ENCODE measurements at regions of chr2 and their contacts with region 1.

Region 1: DNA sequence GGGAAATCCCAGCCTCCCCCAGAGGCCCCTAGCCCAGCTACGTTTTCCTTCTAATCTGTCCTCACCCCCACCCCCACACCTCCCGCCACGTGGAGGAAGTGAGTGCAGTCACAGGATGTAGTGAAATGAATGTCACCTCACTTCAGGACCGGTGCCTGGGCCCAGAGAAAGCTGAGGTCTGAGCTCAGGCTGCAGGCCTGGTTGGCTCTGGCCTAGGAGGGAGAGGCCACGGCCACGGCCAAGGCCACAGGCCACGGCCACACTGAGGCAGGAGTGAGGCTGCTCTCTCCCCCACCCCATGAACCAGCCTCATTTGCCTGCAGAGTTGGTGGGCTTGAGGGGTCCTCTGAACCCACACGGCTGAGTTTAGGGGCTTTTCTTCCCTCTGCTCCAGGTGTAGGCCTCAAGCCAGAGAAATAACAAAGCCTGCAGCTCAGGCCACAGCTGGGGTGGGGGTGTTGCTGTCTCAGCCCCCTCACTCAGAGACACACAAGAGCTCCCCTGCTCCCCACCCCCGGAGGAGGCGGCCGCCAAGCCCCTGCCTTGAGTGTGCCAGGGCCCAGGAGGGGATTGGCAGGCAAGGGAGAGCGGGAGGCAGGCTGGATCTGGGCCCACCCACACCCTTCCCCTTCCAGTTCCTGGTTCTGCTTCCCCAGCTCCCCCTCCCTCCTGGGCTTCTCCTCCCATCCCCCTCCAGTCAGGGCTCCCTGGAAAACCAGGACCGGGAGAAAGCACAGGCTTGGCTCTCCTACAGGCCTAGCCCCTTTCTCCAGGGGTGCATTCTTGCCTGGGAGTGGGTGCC is 27.0 kb downstream of the DNMT3A start:
- DNase-seq: peak; percentile 98
- H3K4me3 Mint-ChIP-seq: peak overlapping the region; percentile 92
- H3K27ac Mint-ChIP-seq: peak overlapping the region; percentile 97
- H3K4me1 Mint-ChIP-seq: peaks cover 64% of the 10 kb centered on the region
- H3K27me3 Mint-ChIP-seq: no peaks in the 10 kb centered on the region

Region 2: GRCh38 chr2:25240636-25241035 is 74.1 kb before region 1 on chr2:
- CTCF ChIA-PET with region 1: no interaction called
- intact Hi-C with region 1: no loop called
- DNase-seq: no peak
- H3K4me3 Mint-ChIP-seq: no peak overlapping the region
- H3K27ac Mint-ChIP-seq: no peak overlapping the region
- H3K4me1 Mint-ChIP-seq: no peaks in the 10 kb centered on the region
- H3K27me3 Mint-ChIP-seq: no peaks in the 10 kb centered on the region

Region 3: DNA sequence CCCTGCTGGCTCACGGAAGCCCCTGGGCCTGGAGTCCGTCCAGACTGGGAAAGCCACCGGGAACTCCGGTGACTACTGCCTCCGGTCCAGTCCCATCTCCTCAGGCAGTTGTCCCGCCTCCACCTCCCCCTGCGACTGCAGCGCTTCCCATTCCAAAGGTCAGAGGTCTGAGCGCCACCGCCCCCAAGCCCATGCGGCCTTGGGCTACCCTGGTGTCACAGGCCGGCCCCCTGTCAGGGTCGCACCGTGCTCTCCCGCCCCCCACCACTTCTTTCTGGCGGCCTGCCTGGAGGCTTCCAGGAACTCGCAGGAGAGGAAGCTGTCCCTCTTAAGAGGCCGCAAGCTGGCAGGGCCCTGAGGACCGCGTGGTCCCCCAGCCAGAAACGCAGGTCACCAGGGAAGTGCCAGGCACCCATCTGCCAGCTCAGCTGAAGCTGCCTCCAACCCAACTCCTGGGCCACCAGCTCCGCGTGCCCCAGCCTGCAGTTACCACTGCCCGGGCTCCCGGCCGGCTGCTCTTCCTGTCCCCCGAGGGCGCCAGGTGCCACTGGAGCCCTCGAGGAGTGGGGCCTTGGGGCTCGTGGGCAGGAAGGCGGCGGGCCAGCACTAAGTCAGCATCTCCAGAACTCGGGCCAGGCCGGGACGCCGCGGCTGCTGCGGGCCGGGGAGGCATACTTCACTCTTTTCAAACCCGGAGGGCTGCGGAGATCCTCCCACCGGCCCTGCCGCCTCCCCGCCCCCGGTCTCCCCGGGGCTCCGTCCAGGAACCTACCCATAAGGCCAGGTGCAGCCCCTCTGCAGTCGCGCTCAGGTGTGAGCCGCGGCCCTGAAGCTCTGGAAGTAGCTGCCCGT is 63.1 kb before region 1 on chr2:
- CTCF ChIA-PET with region 1: no interaction called
- intact Hi-C with region 1: loop called (anchors 2 kb)
- DNase-seq: peak; percentile 45
- H3K4me3 Mint-ChIP-seq: peak overlapping the region; percentile 81
- H3K27ac Mint-ChIP-seq: peak overlapping the region; percentile 85
- H3K4me1 Mint-ChIP-seq: peaks cover 18% of the 10 kb centered on the region
- H3K27me3 Mint-ChIP-seq: no peaks in the 10 kb centered on the region

Region 4: DNA sequence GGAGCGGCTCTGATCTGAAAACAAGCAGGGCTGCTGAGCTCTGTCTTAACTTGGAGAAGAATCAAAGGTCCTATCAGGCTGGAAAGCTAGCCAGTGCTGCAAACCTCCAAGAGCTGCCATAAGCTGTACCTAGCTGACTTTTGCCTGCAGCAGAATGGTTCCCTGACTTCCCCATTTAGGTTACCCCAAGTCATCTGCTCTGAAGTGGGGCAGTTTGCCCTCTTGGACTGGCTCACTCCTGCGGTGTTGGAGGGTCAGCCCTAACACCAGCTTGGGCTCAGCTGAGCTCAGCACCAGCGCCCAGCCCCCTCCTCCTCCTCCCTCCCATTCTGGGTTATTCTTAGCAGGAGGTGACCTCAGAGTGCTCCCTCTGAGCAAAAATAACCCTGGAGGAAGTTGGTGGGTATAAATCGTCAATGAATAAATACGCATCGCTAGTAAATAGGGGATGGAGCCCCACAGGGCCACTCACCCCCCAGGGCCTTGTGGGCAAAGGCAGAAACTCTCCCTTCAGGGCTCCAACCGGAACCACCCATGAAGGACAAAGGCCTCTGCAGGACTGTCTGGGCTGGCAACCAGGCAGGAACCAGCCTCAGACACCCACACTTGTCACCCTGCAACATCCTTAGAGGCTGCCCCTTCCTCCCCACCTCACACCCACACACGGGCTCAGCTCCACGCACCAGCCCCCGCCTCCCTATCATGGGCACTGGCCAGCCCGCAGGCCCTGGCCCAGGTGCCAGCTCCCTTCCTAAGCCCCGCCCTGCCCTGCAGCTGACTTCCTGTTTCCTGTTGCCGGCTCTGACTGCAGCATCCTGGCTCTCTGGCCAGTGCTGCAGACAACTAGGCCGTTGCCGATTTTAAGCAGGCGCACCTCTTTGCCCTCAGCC is 19.9 kb before region 1 on chr2:
- CTCF ChIA-PET with region 1: interaction called, 10 read pairs
- intact Hi-C with region 1: loop called (anchors 1 kb)
- DNase-seq: peak; percentile 89
- H3K4me3 Mint-ChIP-seq: peak overlapping the region; percentile 68
- H3K27ac Mint-ChIP-seq: peak overlapping the region; percentile 90
- H3K4me1 Mint-ChIP-seq: peaks cover 60% of the 10 kb centered on the region
- H3K27me3 Mint-ChIP-seq: no peaks in the 10 kb centered on the region

Region 5: DNA sequence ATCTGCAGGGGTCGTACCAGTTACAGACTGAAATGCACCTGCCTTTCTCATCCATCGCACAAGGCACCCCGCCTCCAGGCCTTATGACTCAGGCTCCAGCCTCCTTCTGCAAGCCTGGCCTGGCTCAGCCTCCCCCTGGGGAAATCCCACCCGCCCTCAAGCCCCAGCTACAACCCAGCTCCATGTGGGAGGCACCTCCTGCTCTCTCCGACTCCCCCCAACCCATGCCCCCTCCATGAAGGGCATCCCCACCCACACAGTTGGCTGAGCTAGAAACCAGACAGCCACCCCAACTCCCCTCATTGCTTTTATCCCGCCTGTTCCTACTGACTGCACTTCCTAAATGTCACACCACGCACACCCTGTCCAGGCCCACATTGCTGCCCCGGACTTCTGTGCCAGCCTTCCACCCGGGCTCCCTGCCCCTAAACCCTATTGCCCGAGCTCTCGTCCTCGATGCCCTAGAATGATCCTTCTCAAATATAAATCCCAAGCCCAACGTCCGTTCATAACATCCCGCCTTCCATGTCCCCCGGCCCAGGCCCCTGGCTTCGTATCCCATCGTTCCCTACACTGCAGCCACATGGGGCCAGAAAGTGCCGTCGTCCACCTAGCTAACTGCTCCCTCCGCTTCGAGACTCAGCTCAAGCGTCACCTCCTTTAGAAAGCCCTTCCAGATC is 17.1 kb after region 1 on chr2:
- CTCF ChIA-PET with region 1: interaction called, 13 read pairs
- intact Hi-C with region 1: loop called (anchors 1 kb)
- DNase-seq: peak; percentile 83
- H3K4me3 Mint-ChIP-seq: no peak overlapping the region
- H3K27ac Mint-ChIP-seq: no peak overlapping the region
- H3K4me1 Mint-ChIP-seq: peaks cover 64% of the 10 kb centered on the region
- H3K27me3 Mint-ChIP-seq: no peaks in the 10 kb centered on the region

Region 6: GRCh38 chr2:25342372-25343186 is 27.9 kb after region 1 on chr2:
- CTCF ChIA-PET with region 1: interaction called, 10 read pairs
- intact Hi-C with region 1: loop called (anchors 1 kb)
- DNase-seq: peak; percentile 82
- H3K4me3 Mint-ChIP-seq: peak overlapping the region; percentile 80
- H3K27ac Mint-ChIP-seq: peak overlapping the region; percentile 71
- H3K4me1 Mint-ChIP-seq: peaks cover 37% of the 10 kb centered on the region
- H3K27me3 Mint-ChIP-seq: no peaks in the 10 kb centered on the region

Region 7: GRCh38 chr2:25521665-25522387 is 207.1 kb after region 1 on chr2:
- CTCF ChIA-PET with region 1: interaction called, 7 read pairs
- intact Hi-C with region 1: loop called (anchors 1 kb)
- DNase-seq: peak; percentile 53
- H3K4me3 Mint-ChIP-seq: peak overlapping the region; percentile 11
- H3K27ac Mint-ChIP-seq: peak overlapping the region; percentile 64
- H3K4me1 Mint-ChIP-seq: peaks cover 8% of the 10 kb centered on the region
- H3K27me3 Mint-ChIP-seq: no peaks in the 10 kb centered on the region

Region 8: DNA sequence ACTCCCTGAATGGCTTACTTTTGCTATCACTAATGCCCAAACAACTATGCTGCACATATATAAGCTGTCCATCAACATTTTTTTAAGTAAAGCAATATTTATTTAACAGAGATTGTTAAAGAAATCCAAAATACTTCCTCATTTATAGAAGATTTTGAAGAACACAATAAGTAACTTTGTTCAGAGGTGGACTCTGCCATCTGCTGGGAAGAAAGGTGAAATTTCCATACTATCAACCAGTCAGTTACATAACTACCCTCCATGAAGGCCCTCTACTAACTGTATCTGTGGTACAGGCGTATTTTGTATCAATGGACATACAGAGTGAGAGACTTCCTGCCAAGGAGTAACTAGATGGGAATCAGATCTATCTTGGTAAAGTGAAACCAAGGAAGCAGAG is 252.7 kb after region 1 on chr2:
- CTCF ChIA-PET with region 1: no interaction called
- intact Hi-C with region 1: loop called (anchors 1 kb)
- DNase-seq: peak; percentile 44
- H3K4me3 Mint-ChIP-seq: no peak overlapping the region
- H3K27ac Mint-ChIP-seq: no peak overlapping the region
- H3K4me1 Mint-ChIP-seq: no peaks in the 10 kb centered on the region
- H3K27me3 Mint-ChIP-seq: no peaks in the 10 kb centered on the region